ENCODE measurements at regions of chr12 and their contacts with region 1.

Region 1: GRCh38 chr12:56333679-56334489 is at the start of gene PAN2:
- DNase-seq: peak; percentile 99
- H3K4me3 ChIP-seq: peak within 1 kb of the TSS; percentile 95
- H3K27ac ChIP-seq: peak within 1 kb of the TSS; percentile 94
- H3K4me1 ChIP-seq: peaks cover 56% of the 10 kb centered on the region
- CTCF ChIP-seq: peak; percentile 78
- total RNA-seq, gene PAN2: 69.9 and 106 TPM in 2 replicates

Region 2: GRCh38 chr12:56243731-56244181 is 90.1 kb before region 1 on chr12:
- CTCF ChIA-PET with region 1: no interaction called
- POLR2A ChIA-PET with region 1: no interaction called
- intact Hi-C with region 1: no loop called
- DNase-seq: no peak
- H3K4me3 ChIP-seq: no peak overlapping the region
- H3K27ac ChIP-seq: no peak overlapping the region
- H3K4me1 ChIP-seq: peaks cover 5% of the 10 kb centered on the region
- CTCF ChIP-seq: no peak

Region 3: DNA sequence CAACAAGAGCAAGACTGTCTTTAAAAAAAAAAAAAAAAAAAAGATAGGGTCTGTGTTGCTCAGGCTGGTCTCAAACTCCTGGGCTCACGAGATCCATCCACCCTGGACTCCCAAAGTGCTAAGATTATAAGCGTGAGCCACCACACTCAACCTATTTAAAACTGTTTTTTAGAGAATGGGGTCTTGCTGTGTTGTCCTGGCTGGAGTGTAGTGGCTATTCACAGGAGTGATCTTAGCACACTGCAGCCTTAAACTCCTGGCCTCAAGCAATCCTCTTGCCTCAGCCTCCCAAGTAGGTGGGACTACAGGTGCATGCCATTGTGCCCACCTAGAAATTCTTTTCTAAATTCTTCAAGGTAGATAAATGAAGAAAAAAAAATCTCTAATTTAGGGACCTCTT is 59.6 kb before region 1 on chr12:
- CTCF ChIA-PET with region 1: no interaction called
- POLR2A ChIA-PET with region 1: no interaction called
- intact Hi-C with region 1: no loop called
- DNase-seq: no peak
- H3K4me3 ChIP-seq: no peak overlapping the region
- H3K27ac ChIP-seq: no peak overlapping the region
- H3K4me1 ChIP-seq: no peaks in the 10 kb centered on the region
- CTCF ChIP-seq: no peak

Region 4: GRCh38 chr12:56461235-56462159 is 127.6 kb after region 1 on chr12:
- CTCF ChIA-PET with region 1: no interaction called
- POLR2A ChIA-PET with region 1: interaction called, 46 read pairs
- intact Hi-C with region 1: loop called (anchors 1 kb)
- DNase-seq: no peak
- H3K4me3 ChIP-seq: no peak overlapping the region
- H3K27ac ChIP-seq: peak overlapping the region; percentile 96
- H3K4me1 ChIP-seq: peaks cover 49% of the 10 kb centered on the region
- CTCF ChIP-seq: no peak

Region 5: GRCh38 chr12:56468216-56469006 is 134.5 kb after region 1 on chr12 and contains the start of gene SPRYD4:
- CTCF ChIA-PET with region 1: no interaction called
- POLR2A ChIA-PET with region 1: interaction called, 6 read pairs
- intact Hi-C with region 1: loop called (anchors 1 kb)
- DNase-seq: peak; percentile 97
- H3K4me3 ChIP-seq: peak within 1 kb of the TSS; percentile 89
- H3K27ac ChIP-seq: peak within 1 kb of the TSS; percentile 76
- H3K4me1 ChIP-seq: peaks cover 22% of the 10 kb centered on the region
- CTCF ChIP-seq: peak; percentile 75
- total RNA-seq, gene SPRYD4: 5.3 and 5.9 TPM in 2 replicates

Measured in OCI-LY7 (cell line).